CD14-positive monocyte (primary cell): ENCODE measurements at regions of chr9 and their contacts with region 1.

Region 1: GRCh38 chr9:33167046-33167808 is at the start of gene B4GALT1:
- DNase-seq: peak; percentile 85 to 93 (median 92)
- H3K4me3 ChIP-seq: peak within 1 kb of the TSS; percentile 71 to 95 (median 92)
- H3K4me3 Mint-ChIP-seq: peak within 1 kb of the TSS; percentile 97 to 99
- H3K27ac ChIP-seq: peak within 1 kb of the TSS; percentile 97 to 99
- H3K27ac Mint-ChIP-seq: peak within 1 kb of the TSS; percentile 98 to 100 (median 99)
- H3K4me1 ChIP-seq: peaks cover 55 to 63% of the 10 kb centered on the region in 2 donors
- H3K4me1 Mint-ChIP-seq: peaks cover 61% of the 10 kb centered on the region
- H3K27me3 ChIP-seq: no peaks in the 10 kb centered on the region
- H3K27me3 Mint-ChIP-seq: peaks cover 0 to 2% (median 0%) of the 10 kb centered on the region in 3 donors
- CTCF ChIP-seq: no peak
- polyA plus RNA-seq, gene B4GALT1: 27.6 to 53.7 (median 38.6) TPM

Region 2: DNA sequence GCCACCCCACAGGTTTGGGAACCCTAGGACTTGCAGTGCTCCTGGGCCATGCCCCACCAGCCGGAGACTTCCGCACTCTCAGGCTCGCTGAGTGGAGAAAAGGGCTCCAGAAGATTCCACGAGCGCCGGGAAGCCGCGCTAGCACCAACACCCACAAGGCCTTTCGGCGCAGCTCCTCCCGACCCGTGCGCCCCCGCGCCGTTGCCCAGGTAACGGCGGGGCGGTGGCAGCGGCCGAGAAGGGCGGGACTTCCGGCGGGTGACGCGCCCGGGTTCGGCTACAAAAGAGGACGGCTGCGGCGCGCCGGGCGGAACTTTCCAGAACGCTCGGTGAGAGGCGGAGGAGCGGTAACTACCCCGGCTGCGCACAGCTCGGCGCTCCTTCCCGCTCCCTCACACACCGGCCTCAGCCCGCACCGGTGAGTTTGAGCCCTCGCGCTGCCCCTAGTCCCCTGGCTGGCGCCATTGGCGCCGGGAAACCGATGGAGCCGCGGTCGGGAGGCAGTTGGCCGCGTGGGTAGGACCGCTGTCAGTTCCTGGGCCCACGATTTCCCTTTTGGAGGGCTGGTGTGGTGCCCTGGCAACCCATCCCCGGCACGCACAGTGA is 142.2 kb before region 1 on chr9 and contains the start of gene DNAJA1:
- intact Hi-C with region 1: loop called in 1 of 2 experiments (anchors 5 kb)
- DNase-seq: peak; percentile 92 to 96 (median 95)
- H3K4me3 ChIP-seq: peak within 1 kb of the TSS; percentile 91 to 100 (median 99)
- H3K4me3 Mint-ChIP-seq: peak within 1 kb of the TSS; percentile 95 to 97
- H3K27ac ChIP-seq: peak within 1 kb of the TSS; percentile 97 to 99
- H3K27ac Mint-ChIP-seq: peak within 1 kb of the TSS; percentile 92 to 96 (median 95)
- H3K4me1 ChIP-seq: peaks cover 44 to 55% of the 10 kb centered on the region in 2 donors
- H3K4me1 Mint-ChIP-seq: peaks cover 55% of the 10 kb centered on the region
- H3K27me3 ChIP-seq: no peaks in the 10 kb centered on the region
- H3K27me3 Mint-ChIP-seq: no peaks in the 10 kb centered on the region
- CTCF ChIP-seq: no peak
- polyA plus RNA-seq, gene DNAJA1: 73.3 to 112 (median 93.6) TPM

Region 3: DNA sequence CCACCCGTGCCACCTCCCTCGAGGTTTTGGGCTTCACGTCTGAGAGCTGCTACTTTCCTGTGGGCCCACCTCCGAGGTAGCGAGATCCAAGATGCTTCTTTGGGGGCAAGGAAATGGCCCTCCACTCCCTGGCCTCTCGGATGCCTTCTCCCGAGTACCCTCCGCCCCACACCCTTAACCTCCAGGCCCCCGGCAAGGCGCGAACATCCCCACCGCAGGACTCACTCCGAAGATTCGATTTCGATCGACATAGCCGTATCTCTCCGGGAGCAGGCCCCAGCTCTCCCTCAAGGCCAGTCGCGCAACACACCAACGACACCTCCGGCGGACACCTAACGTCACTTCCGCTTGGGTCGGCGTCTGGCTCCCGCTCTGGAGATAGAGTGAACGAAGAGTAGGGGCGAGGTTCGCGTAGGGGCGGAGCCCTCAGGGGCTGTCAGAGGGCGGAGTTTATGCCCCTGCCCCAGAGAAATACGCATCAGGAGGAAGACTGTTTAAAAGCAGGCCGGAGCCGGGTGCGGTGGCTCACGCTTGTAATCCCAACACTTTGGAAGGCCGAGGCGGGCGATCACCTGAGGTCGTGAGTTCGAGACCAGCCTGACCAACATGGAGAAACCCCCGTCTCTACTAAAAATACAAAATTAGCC is 90.7 kb before region 1 on chr9 and contains the start of gene SMU1:
- intact Hi-C with region 1: loop called (anchors 5 kb)
- DNase-seq: peak; percentile 97 to 98 (median 98)
- H3K4me3 ChIP-seq: peak within 1 kb of the TSS; percentile 51 to 82 (median 64)
- H3K4me3 Mint-ChIP-seq: peak within 1 kb of the TSS; percentile 96 to 99
- H3K27ac ChIP-seq: peak within 1 kb of the TSS; percentile 90 to 98
- H3K27ac Mint-ChIP-seq: peak within 1 kb of the TSS; percentile 100
- H3K4me1 ChIP-seq: peaks cover 19 to 24% of the 10 kb centered on the region in 2 donors
- H3K4me1 Mint-ChIP-seq: peaks cover 18% of the 10 kb centered on the region
- H3K27me3 ChIP-seq: no peaks in the 10 kb centered on the region
- H3K27me3 Mint-ChIP-seq: peaks cover 0 to 2% (median 0%) of the 10 kb centered on the region in 3 donors
- CTCF ChIP-seq: no peak
- polyA plus RNA-seq, gene SMU1: 8.0 to 21.7 (median 19.3) TPM

Region 4: DNA sequence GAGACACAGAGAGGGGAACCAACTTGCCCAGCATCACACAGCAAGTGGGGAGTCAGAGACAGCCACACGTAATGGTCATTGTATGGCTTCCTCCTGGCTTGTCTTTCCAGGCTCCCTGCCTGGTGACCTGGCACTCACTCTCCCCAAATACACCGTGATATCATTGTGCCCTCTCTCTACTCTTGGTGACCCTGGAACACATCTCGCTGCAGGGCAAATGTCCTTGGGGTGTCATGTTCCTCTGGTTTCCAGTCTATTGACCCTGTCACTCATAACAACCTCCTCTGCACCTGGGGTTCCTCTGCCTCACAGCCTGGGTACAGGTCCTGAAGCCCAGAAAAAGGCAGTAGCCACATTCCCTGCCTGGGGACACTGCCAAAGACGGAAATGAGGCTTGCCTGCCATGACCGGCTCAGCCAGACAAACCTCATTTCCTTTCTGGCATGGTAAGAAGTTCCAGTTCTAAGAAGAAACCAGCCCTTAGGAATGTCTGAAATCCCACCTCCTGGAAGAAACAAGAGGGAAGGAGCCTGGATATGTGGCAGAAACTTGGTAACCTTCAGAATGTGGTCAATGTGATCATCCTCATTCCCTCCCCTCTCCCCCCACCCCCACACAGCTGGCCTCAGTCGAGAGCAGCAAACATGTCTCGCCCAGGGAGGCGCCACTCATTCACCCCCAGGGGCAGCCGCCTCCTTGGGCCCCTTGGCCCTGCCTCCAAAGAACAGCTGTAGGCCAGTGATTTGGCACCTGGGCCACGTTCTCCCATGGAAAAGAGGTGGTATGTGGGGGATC is 60.2 kb before region 1 on chr9:
- intact Hi-C with region 1: no loop called
- DNase-seq: no peak
- H3K4me3 ChIP-seq: no peak overlapping the region
- H3K4me3 Mint-ChIP-seq: no peak overlapping the region
- H3K27ac ChIP-seq: no peak overlapping the region
- H3K27ac Mint-ChIP-seq: peak overlapping the region in 1 of 7 donors; percentile 7
- H3K4me1 ChIP-seq: no peaks in the 10 kb centered on the region
- H3K4me1 Mint-ChIP-seq: peaks cover 5% of the 10 kb centered on the region
- H3K27me3 ChIP-seq: no peaks in the 10 kb centered on the region
- H3K27me3 Mint-ChIP-seq: peaks cover 1 to 4% (median 2%) of the 10 kb centered on the region in 3 donors
- CTCF ChIP-seq: no peak

Region 5: DNA sequence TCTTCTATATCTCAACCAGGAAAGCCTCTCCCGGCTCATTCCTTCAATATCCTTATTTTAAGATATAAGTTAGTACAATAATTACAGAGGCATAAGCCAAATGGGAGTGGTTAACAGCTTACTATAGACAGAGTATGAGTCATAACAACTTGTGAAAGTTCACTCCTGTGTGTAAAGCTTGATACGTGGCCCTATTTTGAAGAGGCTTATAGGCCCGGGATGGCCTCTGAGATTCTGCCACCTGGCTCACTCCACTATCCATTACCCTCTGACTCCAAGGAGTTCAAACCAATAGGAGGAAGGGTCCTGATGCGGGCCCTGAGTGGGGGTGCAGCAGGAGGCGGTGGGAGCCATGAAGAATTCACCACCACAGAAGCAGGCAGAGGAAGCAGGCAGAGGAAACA is 36.7 kb before region 1 on chr9:
- intact Hi-C with region 1: loop called (anchors 2 to 5 kb)
- DNase-seq: peak; percentile 59 to 67 (median 65)
- H3K4me3 ChIP-seq: peak overlapping the region in 1 of 3 experiments; percentile 3
- H3K4me3 Mint-ChIP-seq: peak overlapping the region in 1 of 2 donors; percentile 37
- H3K27ac ChIP-seq: peak overlapping the region; percentile 54 to 78
- H3K27ac Mint-ChIP-seq: peak overlapping the region; percentile 85 to 98 (median 97)
- H3K4me1 ChIP-seq: peaks cover 35 to 54% of the 10 kb centered on the region in 2 donors
- H3K4me1 Mint-ChIP-seq: peaks cover 55% of the 10 kb centered on the region
- H3K27me3 ChIP-seq: no peaks in the 10 kb centered on the region
- H3K27me3 Mint-ChIP-seq: peaks cover 0 to 1% (median 0%) of the 10 kb centered on the region in 3 donors
- CTCF ChIP-seq: no peak

Region 6: DNA sequence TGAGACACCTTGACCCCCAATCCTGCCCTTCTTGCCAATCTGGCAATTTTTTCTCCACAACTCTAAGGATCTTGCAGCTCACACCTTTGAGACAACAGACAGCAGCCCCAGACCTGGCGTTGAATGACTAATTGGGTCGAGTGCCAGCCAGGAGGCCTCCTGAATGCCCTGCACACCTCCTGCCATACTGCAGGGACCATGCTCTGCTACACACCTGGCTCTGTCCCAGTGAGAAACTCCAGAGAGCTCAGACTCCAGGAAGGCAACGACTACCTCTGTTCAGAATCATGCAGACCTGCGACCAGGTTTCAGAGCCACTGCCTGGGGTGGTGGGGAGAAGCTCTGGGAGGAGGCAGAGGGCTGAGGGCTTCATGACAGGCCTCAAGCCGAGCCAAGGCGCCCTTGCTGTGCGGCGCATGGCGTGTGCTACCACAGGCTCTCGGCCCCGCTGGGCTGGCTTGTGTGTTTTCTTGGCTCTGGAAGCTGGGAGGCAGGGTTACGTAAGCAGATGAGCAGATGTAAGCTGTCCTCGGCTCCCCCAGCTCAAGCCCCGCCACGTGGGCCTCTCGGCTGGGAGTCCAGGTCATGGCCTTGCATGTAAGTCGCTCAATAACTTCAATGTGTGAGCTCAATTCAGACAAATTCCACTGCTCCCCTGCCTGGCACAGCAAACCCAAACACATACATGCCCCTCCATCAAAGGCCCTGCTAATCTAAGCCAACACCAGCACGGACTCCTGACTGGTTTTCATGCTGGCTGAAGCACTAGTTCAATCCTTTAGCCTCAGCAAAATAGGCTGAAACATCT is 27.6 kb before region 1 on chr9:
- intact Hi-C with region 1: loop called in 1 of 2 experiments (anchors 5 kb)
- DNase-seq: no peak
- H3K4me3 ChIP-seq: no peak overlapping the region
- H3K4me3 Mint-ChIP-seq: peak overlapping the region in 1 of 2 donors; percentile 33
- H3K27ac ChIP-seq: peak overlapping the region in 1 of 2 donors; percentile 21
- H3K27ac Mint-ChIP-seq: peak overlapping the region in 6 of 7 donors; percentile 3 to 81 (median 48)
- H3K4me1 ChIP-seq: peaks cover 55 to 79% of the 10 kb centered on the region in 2 donors
- H3K4me1 Mint-ChIP-seq: peaks cover 89% of the 10 kb centered on the region
- H3K27me3 ChIP-seq: no peaks in the 10 kb centered on the region
- H3K27me3 Mint-ChIP-seq: peaks cover 0 to 3% (median 0%) of the 10 kb centered on the region in 3 donors
- CTCF ChIP-seq: no peak

Region 7: GRCh38 chr9:33211695-33212393 is 44.6 kb after region 1 on chr9:
- intact Hi-C with region 1: no loop called
- DNase-seq: no peak
- H3K4me3 ChIP-seq: no peak overlapping the region
- H3K4me3 Mint-ChIP-seq: no peak overlapping the region
- H3K27ac ChIP-seq: no peak overlapping the region
- H3K27ac Mint-ChIP-seq: no peak overlapping the region
- H3K4me1 ChIP-seq: no peaks in the 10 kb centered on the region
- H3K4me1 Mint-ChIP-seq: no peaks in the 10 kb centered on the region
- H3K27me3 ChIP-seq: no peaks in the 10 kb centered on the region
- H3K27me3 Mint-ChIP-seq: peaks cover 0 to 3% (median 2%) of the 10 kb centered on the region in 3 donors
- CTCF ChIP-seq: no peak

Region 8: GRCh38 chr9:33225319-33226149 is 58.3 kb after region 1 on chr9:
- intact Hi-C with region 1: loop called (anchors 5 to 10 kb)
- DNase-seq: peak; percentile 63 to 70 (median 68)
- H3K4me3 ChIP-seq: peak overlapping the region in 1 of 3 experiments; percentile 58
- H3K4me3 Mint-ChIP-seq: peak overlapping the region; percentile 53 to 71
- H3K27ac ChIP-seq: peak overlapping the region in 1 of 2 donors; percentile 90
- H3K27ac Mint-ChIP-seq: peak overlapping the region; percentile 91 to 97 (median 96)
- H3K4me1 ChIP-seq: peaks cover 38 to 45% of the 10 kb centered on the region in 2 donors
- H3K4me1 Mint-ChIP-seq: peaks cover 46% of the 10 kb centered on the region
- H3K27me3 ChIP-seq: no peaks in the 10 kb centered on the region
- H3K27me3 Mint-ChIP-seq: peaks cover 0 to 3% (median 0%) of the 10 kb centered on the region in 3 donors
- CTCF ChIP-seq: peak; percentile 85

Region 9: DNA sequence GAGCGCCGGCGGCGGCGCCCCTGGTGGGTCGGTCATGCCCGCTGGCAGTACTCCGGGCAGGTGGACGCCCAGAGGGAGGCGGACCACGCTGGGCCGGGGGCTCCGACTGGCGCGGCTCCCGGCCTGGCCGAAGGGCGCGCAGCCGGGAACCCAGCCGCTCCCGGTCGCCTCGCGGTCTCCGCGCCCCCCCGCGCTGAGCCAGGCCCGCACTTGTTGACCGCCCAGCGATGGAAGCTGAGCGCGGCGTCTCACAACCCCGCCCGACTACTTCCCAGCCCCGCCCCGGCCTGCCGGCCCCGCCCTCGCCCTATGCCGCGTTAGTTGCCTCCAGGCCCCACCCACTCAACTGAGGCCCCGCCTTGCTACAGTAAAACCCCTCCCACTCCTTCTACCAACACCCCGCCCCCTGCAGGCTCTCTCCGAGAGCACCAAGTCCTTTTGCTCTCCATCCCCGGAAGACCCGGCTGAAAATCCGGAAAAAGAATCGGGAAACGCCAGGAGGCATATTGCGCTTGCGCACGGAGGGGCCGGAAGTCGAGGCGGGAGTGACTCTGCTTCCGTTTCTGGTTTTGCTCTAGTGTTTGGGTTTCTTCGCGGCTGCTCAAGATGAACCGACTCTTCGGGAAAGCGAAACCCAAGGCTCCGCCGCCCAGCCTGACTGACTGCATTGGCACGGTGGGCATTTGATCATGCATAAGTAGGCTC is 97.4 kb after region 1 on chr9 and contains the starts of genes BAG1 and CHMP5:
- intact Hi-C with region 1: loop called in 1 of 2 experiments (anchors 10 kb)
- DNase-seq: peak; percentile 99
- H3K4me3 ChIP-seq: peak within 1 kb of the TSS; percentile 79 to 98 (median 88)
- H3K4me3 Mint-ChIP-seq: peak within 1 kb of the TSS; percentile 97 to 99
- H3K27ac ChIP-seq: peak within 1 kb of the TSS; percentile 87 to 96
- H3K27ac Mint-ChIP-seq: peak within 1 kb of the TSS; percentile 97 to 100 (median 99)
- H3K4me1 ChIP-seq: peaks cover 22 to 26% of the 10 kb centered on the region in 2 donors
- H3K4me1 Mint-ChIP-seq: peaks cover 35% of the 10 kb centered on the region
- H3K27me3 ChIP-seq: no peaks in the 10 kb centered on the region
- H3K27me3 Mint-ChIP-seq: peaks cover 0 to 1% (median 0%) of the 10 kb centered on the region in 3 donors
- CTCF ChIP-seq: peak; percentile 17
- polyA plus RNA-seq, gene BAG1: 41.8 to 94.5 (median 93.6) TPM
- polyA plus RNA-seq, gene CHMP5: 33.5 to 72.5 (median 65.0) TPM

Region 10: GRCh38 chr9:33517373-33517772 is 350.1 kb after region 1 on chr9:
- intact Hi-C with region 1: no loop called
- DNase-seq: peak in 1 of 3 donors; percentile 16
- H3K4me3 ChIP-seq: no peak overlapping the region
- H3K4me3 Mint-ChIP-seq: no peak overlapping the region
- H3K27ac ChIP-seq: no peak overlapping the region
- H3K27ac Mint-ChIP-seq: peak overlapping the region in 1 of 7 donors; percentile 61
- H3K4me1 ChIP-seq: no peaks in the 10 kb centered on the region
- H3K4me1 Mint-ChIP-seq: no peaks in the 10 kb centered on the region
- H3K27me3 ChIP-seq: peaks cover 3 to 7% of the 10 kb centered on the region in 2 donors
- H3K27me3 Mint-ChIP-seq: peaks cover 12 to 18% (median 13%) of the 10 kb centered on the region in 3 donors
- CTCF ChIP-seq: peak; percentile 67